H1 (cell line): ENCODE measurements at regions of chr19 and their contacts with region 1.

Region 1: DNA sequence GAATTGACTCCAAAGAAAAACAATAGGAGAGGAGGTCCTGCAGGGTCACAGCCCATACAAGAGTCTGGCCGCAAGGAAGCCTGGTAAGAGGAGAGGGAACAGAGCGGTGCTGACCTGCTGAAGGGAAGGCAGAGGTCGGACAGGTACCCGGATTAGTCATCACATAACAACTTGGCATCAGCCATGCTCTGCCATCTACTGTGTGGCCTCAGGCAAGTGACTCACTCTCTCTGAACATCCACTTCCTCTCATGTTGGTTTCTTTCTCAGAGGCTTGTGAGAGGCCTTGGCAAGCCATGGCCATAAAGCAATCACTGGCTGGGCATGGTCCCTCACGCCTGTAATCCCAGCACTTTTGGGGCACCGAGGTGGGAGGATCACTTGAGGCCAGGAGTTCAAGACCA is 7.4 kb upstream of the CAPNS1 start:
- DNase-seq: no peak
- H3K4me3 ChIP-seq: no peak overlapping the region
- H3K27ac ChIP-seq: no peak overlapping the region
- H3K4me1 ChIP-seq: peaks cover 0 to 3% (median 2%) of the 10 kb centered on the region in 4 experiments; a peak in 2 of 7 replicates
- H3K27me3 ChIP-seq: no peaks in the 10 kb centered on the region
- CTCF ChIP-seq: no peak
- EP300 ChIP-seq: no peak
- POLR2A ChIP-seq: no peak
- RAD21 ChIP-seq: no peak

Region 2: DNA sequence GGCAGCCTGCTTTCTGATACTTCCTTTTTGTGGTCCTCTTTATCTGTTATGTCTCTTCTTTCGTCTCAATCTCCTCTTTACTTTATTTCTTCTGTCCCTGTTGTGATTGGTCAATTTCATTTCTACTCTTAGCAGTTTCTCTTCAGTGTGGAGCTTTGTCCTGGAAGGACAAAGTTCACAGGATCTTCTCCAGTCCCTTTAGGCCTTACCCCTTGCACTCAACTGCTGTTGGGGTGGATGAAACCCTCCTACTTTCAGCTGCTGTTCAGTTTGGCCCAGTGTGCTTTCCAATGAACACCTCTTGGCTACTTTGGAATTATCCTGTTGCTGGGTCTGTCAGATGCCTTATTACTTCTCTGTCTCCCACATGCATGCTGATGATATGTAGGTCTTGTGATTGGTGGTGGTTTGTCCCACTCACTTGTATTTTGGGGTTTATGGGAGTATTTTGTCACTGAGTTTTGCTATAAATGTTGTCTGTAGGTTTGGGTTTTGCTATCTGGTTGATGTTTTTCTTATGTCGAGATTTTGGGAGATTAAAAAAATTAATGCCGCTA is 53.0 kb before region 1 on chr19:
- CTCF ChIA-PET with region 1: no interaction called
- POLR2A ChIA-PET with region 1: no interaction called
- DNase-seq: no peak
- H3K4me3 ChIP-seq: no peak overlapping the region
- H3K27ac ChIP-seq: no peak overlapping the region
- H3K4me1 ChIP-seq: no peaks in the 10 kb centered on the region
- H3K27me3 ChIP-seq: no peaks in the 10 kb centered on the region
- CTCF ChIP-seq: no peak
- EP300 ChIP-seq: no peak
- POLR2A ChIP-seq: no peak
- RAD21 ChIP-seq: no peak

Region 3: GRCh38 chr19:36114763-36115452 is 17.6 kb before region 1 on chr19 and contains the start of gene POLR2I:
- CTCF ChIA-PET with region 1: interaction called, 14 read pairs
- POLR2A ChIA-PET with region 1: interaction called, 27 read pairs
- DNase-seq: peak; percentile 98 to 99
- H3K4me3 ChIP-seq: peak within 1 kb of the TSS; percentile 73 to 96 (median 82)
- H3K27ac ChIP-seq: peak within 1 kb of the TSS; percentile 76
- H3K4me1 ChIP-seq: peaks cover 8 to 24% (median 18%) of the 10 kb centered on the region in 4 experiments
- H3K27me3 ChIP-seq: no peaks in the 10 kb centered on the region
- CTCF ChIP-seq: no peak
- EP300 ChIP-seq: no peak
- POLR2A ChIP-seq: peak in 1 of 2 experiments; percentile 70; a peak in 2 of 3 replicates
- RAD21 ChIP-seq: no peak
- total RNA-seq, gene POLR2I: 149 and 150 TPM in 2 replicates

Region 4: DNA sequence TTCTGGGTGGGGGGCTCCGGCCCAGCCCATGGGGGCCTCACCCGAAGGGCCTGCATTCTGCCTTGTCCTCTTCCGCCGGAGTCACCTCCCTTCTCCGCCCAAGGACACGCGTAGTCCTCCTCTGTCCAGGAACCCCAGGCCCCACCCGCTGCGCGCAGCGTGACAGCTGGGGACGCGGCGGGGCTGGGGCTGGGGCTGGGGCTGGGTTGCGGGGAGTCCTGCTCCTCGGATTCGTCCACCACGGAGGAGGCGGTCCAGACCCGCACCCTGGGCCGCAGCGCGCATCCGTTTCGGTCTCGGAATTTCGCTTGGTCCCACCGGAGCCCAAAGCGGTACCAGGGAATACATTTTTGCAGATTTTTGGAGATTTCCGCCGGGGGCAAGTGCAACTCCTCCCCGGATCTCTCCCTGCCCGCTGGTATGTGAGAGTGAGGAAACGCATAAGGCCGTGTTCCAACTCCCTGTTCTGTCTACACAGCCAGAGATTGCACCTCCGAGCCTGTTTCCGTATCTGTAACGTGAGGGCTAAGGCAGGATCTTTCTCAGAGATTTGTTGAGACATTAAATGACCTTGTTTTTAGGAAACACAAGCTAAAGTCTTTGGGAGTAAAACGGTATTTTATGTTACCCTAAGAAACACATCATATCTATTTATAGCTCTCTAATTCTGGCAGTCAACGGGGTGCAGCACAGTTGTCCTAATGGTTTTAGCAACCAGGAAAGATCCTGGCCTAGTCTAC is 20.0 kb after region 1 on chr19 and contains the start of gene COX7A1:
- CTCF ChIA-PET with region 1: interaction called, 17 read pairs
- POLR2A ChIA-PET with region 1: interaction called, 9 read pairs
- DNase-seq: no peak
- H3K4me3 ChIP-seq: peak within 1 kb of the TSS; percentile 21 to 47 (median 38); a peak in 7 of 8 replicates
- H3K27ac ChIP-seq: no peak within 1 kb of the TSS
- H3K4me1 ChIP-seq: peaks cover 0 to 5% (median 0%) of the 10 kb centered on the region in 4 experiments; a peak in 1 of 7 replicates
- H3K27me3 ChIP-seq: no peaks in the 10 kb centered on the region
- CTCF ChIP-seq: no peak
- EP300 ChIP-seq: no peak
- POLR2A ChIP-seq: no peak
- RAD21 ChIP-seq: no peak
- total RNA-seq, gene COX7A1: 0.60 and 0.75 TPM in 2 replicates

Region 5: GRCh38 chr19:36169084-36169760 is 36.7 kb after region 1 on chr19:
- CTCF ChIA-PET with region 1: interaction called, 157 read pairs
- POLR2A ChIA-PET with region 1: interaction called, 45 read pairs
- DNase-seq: no peak
- H3K4me3 ChIP-seq: no peak overlapping the region; a peak in 1 of 8 replicates
- H3K27ac ChIP-seq: no peak overlapping the region
- H3K4me1 ChIP-seq: no peaks in the 10 kb centered on the region
- H3K27me3 ChIP-seq: no peaks in the 10 kb centered on the region
- CTCF ChIP-seq: no peak
- EP300 ChIP-seq: no peak
- POLR2A ChIP-seq: no peak
- RAD21 ChIP-seq: no peak

Region 6: DNA sequence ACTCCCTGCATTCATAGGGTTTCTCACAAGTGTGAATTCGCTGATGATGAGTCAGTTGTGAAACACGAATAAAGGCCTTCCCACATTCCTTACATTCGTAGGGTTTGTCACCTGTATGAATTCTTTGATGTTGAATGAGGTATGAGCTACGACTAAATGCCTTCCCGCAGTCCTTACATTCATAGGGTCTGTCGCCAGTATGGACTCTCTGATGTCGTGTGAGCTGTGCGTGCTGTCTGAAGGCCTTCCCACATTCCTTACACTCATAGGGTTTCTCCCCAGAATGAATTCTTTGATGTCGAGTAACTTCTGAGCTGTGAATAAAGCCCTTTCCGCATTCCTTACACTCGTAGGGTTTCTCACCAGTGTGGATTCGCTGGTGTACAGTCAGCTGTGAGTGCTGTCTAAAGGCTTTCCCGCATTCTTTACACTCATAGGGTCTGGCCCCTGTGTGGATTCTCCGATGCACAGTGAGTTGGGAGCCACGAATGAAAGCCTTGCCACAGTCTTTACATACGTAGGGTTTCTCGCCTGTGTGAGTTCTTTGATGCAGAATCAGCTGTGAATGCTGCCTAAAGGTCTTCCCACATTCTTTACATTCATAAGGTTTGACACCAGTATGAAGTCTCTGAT is 50.2 kb after region 1 on chr19:
- CTCF ChIA-PET with region 1: interaction called, 12 read pairs
- POLR2A ChIA-PET with region 1: interaction called, 4 read pairs
- DNase-seq: no peak
- H3K4me3 ChIP-seq: no peak overlapping the region
- H3K27ac ChIP-seq: no peak overlapping the region
- H3K4me1 ChIP-seq: peaks cover 0 to 9% (median 5%) of the 10 kb centered on the region in 4 experiments; a peak in 3 of 7 replicates
- H3K27me3 ChIP-seq: no peaks in the 10 kb centered on the region
- CTCF ChIP-seq: no peak
- EP300 ChIP-seq: no peak
- POLR2A ChIP-seq: no peak
- RAD21 ChIP-seq: no peak

Region 7: GRCh38 chr19:36207605-36208252 is 75.2 kb after region 1 on chr19:
- CTCF ChIA-PET with region 1: no interaction called
- POLR2A ChIA-PET with region 1: no interaction called
- DNase-seq: no peak
- H3K4me3 ChIP-seq: no peak overlapping the region
- H3K27ac ChIP-seq: no peak overlapping the region
- H3K4me1 ChIP-seq: no peaks in the 10 kb centered on the region
- H3K27me3 ChIP-seq: no peaks in the 10 kb centered on the region
- CTCF ChIP-seq: no peak
- EP300 ChIP-seq: no peak
- POLR2A ChIP-seq: no peak
- RAD21 ChIP-seq: no peak